ENCODE measurements at regions of chr1 and their contacts with region 1.

Region 1: GRCh38 chr1:168082008-168082876 is 54.5 kb downstream of the GPR161 start:
- DNase-seq: peak; percentile 91
- H3K4me3 ChIP-seq: no peak overlapping the region
- H3K27ac ChIP-seq: peak overlapping the region; percentile 59 to 78 (median 65)
- H3K4me1 ChIP-seq: peaks cover 41 to 78% (median 75%) of the 10 kb centered on the region in 4 donors
- H3K27me3 ChIP-seq: no peaks in the 10 kb centered on the region
- CTCF ChIP-seq: peak; percentile 74 to 92 (median 76)
- EP300 ChIP-seq: no peak
- POLR2A ChIP-seq: no peak

Region 2: DNA sequence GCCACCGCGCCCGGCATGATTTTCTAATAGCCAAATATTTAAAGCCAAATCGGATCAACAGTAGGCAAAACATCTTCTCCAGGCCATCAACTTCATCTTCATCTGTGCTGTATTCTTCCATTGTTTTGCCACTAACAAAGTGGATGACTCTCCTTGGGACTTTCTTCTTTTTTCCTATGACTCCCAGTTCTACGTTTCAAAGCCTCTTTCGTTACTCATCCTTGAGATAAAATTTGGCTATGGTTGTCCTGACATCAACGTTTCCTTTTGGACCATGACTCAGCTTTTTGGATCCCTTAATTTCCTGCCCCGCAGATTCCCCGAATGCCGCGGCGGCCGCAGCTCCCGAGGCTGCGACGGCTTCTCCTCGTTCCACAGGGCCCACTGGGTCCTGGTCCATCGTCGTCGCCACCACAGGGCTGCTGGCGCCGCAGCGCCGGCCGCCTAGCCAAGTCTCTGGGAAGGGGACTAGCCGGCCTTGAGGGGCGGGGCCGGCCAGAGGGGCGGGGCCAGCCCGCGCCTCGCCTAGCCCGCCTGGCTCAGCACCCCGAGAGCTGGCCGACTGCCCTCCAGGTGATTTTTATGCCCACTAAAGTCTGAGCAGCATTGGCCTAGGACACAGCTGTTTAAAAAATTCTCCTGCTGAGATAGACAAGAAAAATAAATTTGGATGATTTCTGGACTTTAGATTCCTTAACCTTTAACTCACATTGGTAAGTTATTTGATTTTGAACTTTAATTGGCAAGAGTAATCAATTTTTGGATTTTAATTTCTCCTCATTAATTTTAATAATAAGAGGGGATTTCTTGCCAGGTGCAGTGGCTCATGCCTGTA is 262.2 kb before region 1 on chr1:
- intact Hi-C with region 1: loop called (anchors 5 kb)
- DNase-seq: no peak
- H3K4me3 ChIP-seq: peak overlapping the region; percentile 47 to 55 (median 52)
- H3K27ac ChIP-seq: peak overlapping the region; percentile 77 to 87 (median 80)
- H3K4me1 ChIP-seq: peaks cover 0 to 21% (median 14%) of the 10 kb centered on the region in 4 donors
- H3K27me3 ChIP-seq: no peaks in the 10 kb centered on the region
- CTCF ChIP-seq: peak in 1 of 3 experiments; percentile 13
- EP300 ChIP-seq: no peak
- POLR2A ChIP-seq: no peak

Region 3: GRCh38 chr1:167936068-167936929 is 145.9 kb before region 1 on chr1 and contains the start of gene DCAF6:
- intact Hi-C with region 1: loop called (anchors 5 kb)
- DNase-seq: peak; percentile 98
- H3K4me3 ChIP-seq: peak within 1 kb of the TSS; percentile 86 to 98 (median 94)
- H3K27ac ChIP-seq: peak within 1 kb of the TSS; percentile 90 to 99 (median 98)
- H3K4me1 ChIP-seq: peaks cover 29 to 67% (median 48%) of the 10 kb centered on the region in 4 donors
- H3K27me3 ChIP-seq: no peaks in the 10 kb centered on the region
- CTCF ChIP-seq: no peak
- EP300 ChIP-seq: no peak
- POLR2A ChIP-seq: peak; percentile 84
- total RNA-seq, gene DCAF6: 80.4 to 110 (median 93.9) TPM

Region 4: GRCh38 chr1:168145184-168146159 is 63.2 kb after region 1 on chr1:
- intact Hi-C with region 1: loop called (anchors 5 kb)
- DNase-seq: peak; percentile 95
- H3K4me3 ChIP-seq: no peak overlapping the region
- H3K27ac ChIP-seq: peak overlapping the region in 1 of 4 donors; percentile 7
- H3K4me1 ChIP-seq: peaks cover 0 to 11% (median 6%) of the 10 kb centered on the region in 4 donors
- H3K27me3 ChIP-seq: no peaks in the 10 kb centered on the region
- CTCF ChIP-seq: peak; percentile 93 to 96 (median 94)
- EP300 ChIP-seq: no peak
- POLR2A ChIP-seq: no peak

Region 5: DNA sequence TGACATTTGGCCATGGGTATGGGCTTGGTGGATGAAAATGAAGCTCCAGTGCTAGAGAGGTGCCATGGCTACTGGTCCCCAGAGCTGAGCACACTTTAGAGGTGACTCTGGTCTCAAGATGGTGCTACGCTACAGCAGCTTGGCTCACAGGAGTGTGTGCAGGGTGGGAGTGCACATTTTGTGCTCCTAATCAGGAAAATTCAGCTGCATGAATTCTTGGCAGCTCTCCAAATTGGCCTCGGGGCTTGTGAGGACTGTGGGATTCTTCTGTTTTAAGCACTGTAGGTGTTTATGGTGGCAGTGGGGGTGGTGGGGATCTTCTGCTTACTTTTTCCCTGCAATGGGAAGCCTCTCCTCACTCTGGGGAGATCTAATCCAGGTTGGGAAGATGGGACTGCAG is 79.2 kb after region 1 on chr1:
- intact Hi-C with region 1: no loop called
- DNase-seq: peak; percentile 37
- H3K4me3 ChIP-seq: no peak overlapping the region
- H3K27ac ChIP-seq: no peak overlapping the region
- H3K4me1 ChIP-seq: peaks cover 0 to 4% (median 0%) of the 10 kb centered on the region in 4 donors
- H3K27me3 ChIP-seq: no peaks in the 10 kb centered on the region
- CTCF ChIP-seq: no peak
- EP300 ChIP-seq: no peak
- POLR2A ChIP-seq: no peak

Region 6: DNA sequence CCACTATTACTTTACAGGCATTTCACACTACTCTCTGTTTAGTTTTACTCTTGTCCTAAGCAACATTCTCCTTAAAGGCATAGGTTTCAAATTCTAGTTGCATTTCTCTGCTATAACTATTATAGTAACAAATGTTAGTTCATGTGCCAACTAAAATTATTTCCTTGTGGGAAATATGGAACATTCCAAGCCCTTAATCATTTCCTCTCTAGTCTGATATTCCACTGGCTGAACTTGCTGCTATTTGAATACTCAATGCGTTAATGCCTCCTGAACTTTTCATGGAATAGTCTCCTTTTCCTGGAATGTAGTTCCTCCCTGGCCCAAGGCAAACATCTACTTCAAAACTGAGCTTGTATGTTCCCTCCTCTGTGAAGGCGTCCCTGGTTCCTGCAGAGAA is 179.1 kb after region 1 on chr1:
- intact Hi-C with region 1: no loop called
- DNase-seq: no peak
- H3K4me3 ChIP-seq: no peak overlapping the region
- H3K27ac ChIP-seq: no peak overlapping the region
- H3K4me1 ChIP-seq: peaks cover 0 to 9% (median 5%) of the 10 kb centered on the region in 4 donors
- H3K27me3 ChIP-seq: no peaks in the 10 kb centered on the region
- CTCF ChIP-seq: no peak
- EP300 ChIP-seq: no peak
- POLR2A ChIP-seq: no peak

Region 7: DNA sequence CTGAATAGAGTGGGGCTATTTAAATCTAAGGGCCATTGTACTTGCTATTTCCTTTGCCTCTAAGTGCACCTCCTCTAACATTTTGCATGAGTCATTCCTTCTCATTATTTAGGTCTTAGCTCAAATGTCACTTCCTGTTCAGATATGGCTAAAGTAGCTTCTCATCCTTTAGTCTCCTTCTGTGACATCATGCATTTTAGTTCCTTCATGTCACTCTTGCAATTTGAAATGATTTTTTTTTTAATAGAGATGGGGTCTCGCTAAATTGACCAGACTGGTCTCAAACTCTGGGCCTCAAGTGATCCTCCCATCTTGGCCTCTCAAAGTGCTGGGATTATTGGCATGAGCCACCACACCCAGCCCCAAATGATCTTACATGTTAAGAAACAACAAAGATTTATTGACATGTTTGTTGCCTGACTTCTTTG is 205.0 kb after region 1 on chr1:
- intact Hi-C with region 1: no loop called
- DNase-seq: no peak
- H3K4me3 ChIP-seq: no peak overlapping the region
- H3K27ac ChIP-seq: no peak overlapping the region
- H3K4me1 ChIP-seq: peaks cover 0 to 11% (median 5%) of the 10 kb centered on the region in 4 donors
- H3K27me3 ChIP-seq: no peaks in the 10 kb centered on the region
- CTCF ChIP-seq: no peak
- EP300 ChIP-seq: no peak
- POLR2A ChIP-seq: no peak

Measured in esophagus muscularis mucosa (tissue), 4 donors.